H1 (cell line): ENCODE measurements at regions of chr3 and their contacts with region 1.

Region 1: DNA sequence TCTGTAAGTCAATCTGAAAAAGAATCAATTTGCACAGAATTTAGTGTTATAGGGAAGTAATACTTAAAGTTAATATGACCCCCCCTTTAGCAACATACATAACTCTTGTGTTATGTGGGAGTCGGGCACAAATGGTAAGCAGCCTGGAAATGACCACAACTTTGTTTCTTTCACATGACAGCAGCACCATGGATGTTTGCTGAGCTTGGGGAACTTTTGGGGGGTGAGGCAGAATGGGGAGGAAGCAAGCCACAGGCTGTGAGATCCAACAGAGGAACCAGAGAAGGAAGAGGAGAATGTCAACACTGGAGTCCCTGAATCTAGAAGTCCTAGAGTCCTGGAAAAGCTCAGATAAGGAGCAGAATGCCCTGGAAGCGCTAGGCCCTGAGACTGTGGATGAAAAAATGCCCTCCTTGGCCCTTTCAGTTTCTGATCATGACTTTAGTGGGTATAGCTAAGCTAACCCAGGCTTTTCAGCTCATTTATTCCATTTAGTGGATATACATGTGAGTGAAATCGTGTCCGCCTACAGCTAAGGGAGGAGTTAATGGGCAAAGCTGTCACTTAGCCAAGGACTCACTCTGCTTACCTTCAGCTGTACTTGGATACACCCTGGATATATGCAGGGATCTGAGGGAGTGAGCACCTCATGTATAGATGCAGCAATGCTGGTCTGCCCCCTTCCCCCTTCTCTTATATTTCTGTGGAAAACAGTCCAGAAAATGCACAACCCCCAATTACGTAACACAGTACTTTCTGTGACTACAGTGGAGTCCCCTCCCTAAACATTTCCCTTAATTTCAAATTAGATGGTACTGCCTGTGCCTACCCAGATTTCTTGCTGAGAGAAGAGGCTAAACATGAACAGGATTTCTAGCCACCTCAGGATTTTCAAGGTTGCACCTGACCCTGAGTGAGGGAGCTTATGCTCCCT is 39.1 kb downstream of the CFAP91 start:
- DNase-seq: no peak
- H3K4me3 ChIP-seq: no peak overlapping the region
- H3K27ac ChIP-seq: no peak overlapping the region
- H3K4me1 ChIP-seq: peaks cover 0 to 2% (median 0%) of the 10 kb centered on the region in 4 experiments; a peak in 1 of 7 replicates
- H3K27me3 ChIP-seq: no peaks in the 10 kb centered on the region
- CTCF ChIP-seq: no peak
- EP300 ChIP-seq: no peak
- POLR2A ChIP-seq: no peak
- RAD21 ChIP-seq: no peak

Region 2: GRCh38 chr3:119627461-119627860 is 114.5 kb before region 1 on chr3:
- CTCF ChIA-PET with region 1: no interaction called
- POLR2A ChIA-PET with region 1: no interaction called
- DNase-seq: no peak
- H3K4me3 ChIP-seq: no peak overlapping the region
- H3K27ac ChIP-seq: no peak overlapping the region
- H3K4me1 ChIP-seq: peaks cover 0 to 6% (median 1%) of the 10 kb centered on the region in 4 experiments; a peak in 2 of 7 replicates
- H3K27me3 ChIP-seq: no peaks in the 10 kb centered on the region
- CTCF ChIP-seq: no peak
- EP300 ChIP-seq: no peak
- POLR2A ChIP-seq: no peak
- RAD21 ChIP-seq: no peak

Region 3: DNA sequence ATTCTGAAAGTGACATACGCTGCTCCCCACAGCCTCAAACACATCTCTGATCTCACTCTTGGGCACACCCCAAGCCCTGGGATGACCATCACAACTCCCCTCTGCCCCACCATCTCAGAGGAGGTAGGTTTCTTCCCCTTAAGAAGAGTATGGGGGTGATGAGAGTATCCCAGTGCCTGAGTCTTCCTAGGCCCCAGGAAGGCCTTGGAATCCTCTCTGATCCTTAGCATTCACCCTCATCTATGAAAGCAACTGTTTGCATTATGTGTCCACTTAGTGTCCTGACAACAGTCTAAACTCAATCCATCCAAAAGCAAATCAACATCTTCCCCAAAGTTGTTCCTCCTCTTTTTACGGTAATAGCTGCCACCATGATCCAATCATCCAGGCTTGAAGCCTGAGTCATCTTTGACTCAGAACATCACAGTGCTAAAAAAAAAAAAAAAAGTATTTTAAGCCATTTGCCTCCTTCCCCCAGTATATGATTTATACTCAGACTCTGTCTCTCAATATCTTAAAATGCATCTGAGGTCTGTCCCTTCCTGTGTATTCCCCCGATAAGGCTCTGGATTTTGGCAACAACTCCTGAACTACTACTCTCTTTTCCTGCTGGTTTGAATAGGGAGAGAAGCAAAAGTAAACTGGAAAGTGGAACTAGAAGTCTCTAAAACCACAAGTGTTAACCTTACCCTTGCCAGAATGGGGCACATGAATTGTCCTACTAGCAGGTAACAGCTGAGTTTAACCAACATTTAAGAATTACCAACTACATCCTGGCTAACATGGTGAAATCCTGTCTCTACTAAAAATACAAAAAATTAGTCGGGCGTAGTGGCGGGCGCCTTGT is 104.0 kb before region 1 on chr3:
- CTCF ChIA-PET with region 1: no interaction called
- POLR2A ChIA-PET with region 1: no interaction called
- DNase-seq: no peak
- H3K4me3 ChIP-seq: no peak overlapping the region
- H3K27ac ChIP-seq: no peak overlapping the region
- H3K4me1 ChIP-seq: no peaks in the 10 kb centered on the region
- H3K27me3 ChIP-seq: no peaks in the 10 kb centered on the region
- CTCF ChIP-seq: no peak
- EP300 ChIP-seq: no peak
- POLR2A ChIP-seq: no peak
- RAD21 ChIP-seq: no peak

Region 4: DNA sequence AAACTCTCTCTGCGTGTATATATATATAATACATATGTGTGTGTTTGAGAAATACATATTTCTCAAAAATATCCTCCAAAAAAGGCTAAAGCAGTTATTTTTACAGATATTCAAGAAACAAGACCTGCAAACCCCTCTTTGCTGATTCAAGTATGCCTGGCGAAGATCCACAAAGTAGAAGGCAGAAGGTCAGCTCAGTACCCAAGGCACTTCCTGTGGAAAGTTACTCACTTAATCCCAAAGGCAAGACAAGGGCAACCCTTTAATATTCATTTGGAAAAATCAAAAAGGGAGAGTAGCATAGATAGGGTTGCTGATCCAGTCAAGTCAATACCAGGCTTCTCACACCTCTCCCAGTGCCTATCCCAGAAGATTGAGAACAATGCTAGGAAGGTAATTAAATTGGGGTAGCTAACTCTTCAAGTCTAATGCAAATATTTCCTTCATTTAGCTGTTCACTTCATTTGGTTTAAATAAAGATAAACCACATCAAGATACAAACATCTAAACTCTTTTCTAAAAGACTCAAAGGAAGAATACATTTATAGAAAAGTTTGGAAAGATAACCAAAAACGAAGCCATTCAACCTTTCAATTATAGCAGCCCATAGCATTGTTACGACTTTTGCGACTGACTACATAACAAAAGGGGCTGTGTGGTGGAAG is 71.9 kb before region 1 on chr3:
- CTCF ChIA-PET with region 1: no interaction called
- POLR2A ChIA-PET with region 1: no interaction called
- DNase-seq: no peak
- H3K4me3 ChIP-seq: no peak overlapping the region
- H3K27ac ChIP-seq: no peak overlapping the region
- H3K4me1 ChIP-seq: no peaks in the 10 kb centered on the region
- H3K27me3 ChIP-seq: no peaks in the 10 kb centered on the region
- CTCF ChIP-seq: no peak
- EP300 ChIP-seq: no peak
- POLR2A ChIP-seq: no peak
- RAD21 ChIP-seq: no peak

Region 5: GRCh38 chr3:119690043-119690656 is 51.8 kb before region 1 on chr3:
- CTCF ChIA-PET with region 1: interaction called, 16 read pairs
- POLR2A ChIA-PET with region 1: no interaction called
- DNase-seq: no peak
- H3K4me3 ChIP-seq: no peak overlapping the region
- H3K27ac ChIP-seq: no peak overlapping the region
- H3K4me1 ChIP-seq: no peaks in the 10 kb centered on the region
- H3K27me3 ChIP-seq: peaks cover 0 to 2% (median 0%) of the 10 kb centered on the region in 4 experiments; a peak in 2 of 7 replicates
- CTCF ChIP-seq: peak in 2 of 3 experiments; percentile 27 to 45; a peak in 2 of 4 replicates
- EP300 ChIP-seq: no peak
- POLR2A ChIP-seq: no peak
- RAD21 ChIP-seq: peak; percentile 23 to 25; a peak in 2 of 4 replicates

Region 6: DNA sequence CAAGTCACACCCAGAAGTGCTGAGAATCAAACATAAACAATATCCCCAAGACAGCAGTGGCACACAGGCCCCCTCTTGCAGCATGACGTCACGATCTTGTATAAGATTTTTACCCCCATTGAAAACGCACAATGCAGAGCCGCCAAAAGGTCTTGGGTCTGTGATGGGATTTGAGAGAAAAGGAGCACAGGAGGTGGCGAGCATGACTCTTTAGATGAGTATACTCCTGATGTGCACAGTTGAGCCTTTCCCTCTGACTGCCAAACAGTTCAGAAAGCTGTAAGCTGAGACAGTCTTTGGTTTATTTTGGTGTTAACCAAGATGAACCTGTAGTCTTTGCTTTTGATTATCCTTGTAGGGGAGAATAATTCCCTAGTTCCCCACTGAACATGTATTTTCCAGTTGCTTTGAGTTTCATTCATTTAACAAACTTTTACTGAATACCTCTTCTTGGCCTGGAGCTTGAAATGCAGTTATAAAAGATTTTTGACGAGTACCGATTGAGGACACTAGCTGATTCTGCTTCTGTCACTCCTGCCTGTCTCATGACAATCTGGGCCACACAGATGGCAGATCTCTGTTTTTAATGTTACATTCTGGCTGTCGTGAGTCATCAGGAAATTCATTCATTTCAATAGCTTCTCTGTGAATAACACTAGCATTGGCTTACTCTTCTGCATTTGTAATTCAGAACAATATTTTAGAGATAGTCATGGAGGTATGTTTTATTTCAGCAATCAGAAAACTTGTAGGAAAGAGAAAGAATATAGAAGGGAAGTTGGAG is 10.2 kb before region 1 on chr3:
- CTCF ChIA-PET with region 1: interaction called, 23 read pairs
- POLR2A ChIA-PET with region 1: interaction called, 4 read pairs
- DNase-seq: no peak
- H3K4me3 ChIP-seq: no peak overlapping the region
- H3K27ac ChIP-seq: no peak overlapping the region
- H3K4me1 ChIP-seq: no peaks in the 10 kb centered on the region
- H3K27me3 ChIP-seq: no peaks in the 10 kb centered on the region
- CTCF ChIP-seq: no peak
- EP300 ChIP-seq: no peak
- POLR2A ChIP-seq: no peak
- RAD21 ChIP-seq: no peak